A673 (cell line): ENCODE measurements at regions of chr6 and their contacts with region 1.

Region 1: GRCh38 chr6:33126101-33126714 is 50.4 kb downstream of the HLA-DPB1 start:
- DNase-seq: peak; percentile 49
- H3K4me3 ChIP-seq: no peak overlapping the region
- H3K27ac ChIP-seq: no peak overlapping the region
- H3K4me1 ChIP-seq: no peaks in the 10 kb centered on the region
- H3K27me3 ChIP-seq: no peaks in the 10 kb centered on the region
- CTCF ChIP-seq: peak; percentile 84

Region 2: DNA sequence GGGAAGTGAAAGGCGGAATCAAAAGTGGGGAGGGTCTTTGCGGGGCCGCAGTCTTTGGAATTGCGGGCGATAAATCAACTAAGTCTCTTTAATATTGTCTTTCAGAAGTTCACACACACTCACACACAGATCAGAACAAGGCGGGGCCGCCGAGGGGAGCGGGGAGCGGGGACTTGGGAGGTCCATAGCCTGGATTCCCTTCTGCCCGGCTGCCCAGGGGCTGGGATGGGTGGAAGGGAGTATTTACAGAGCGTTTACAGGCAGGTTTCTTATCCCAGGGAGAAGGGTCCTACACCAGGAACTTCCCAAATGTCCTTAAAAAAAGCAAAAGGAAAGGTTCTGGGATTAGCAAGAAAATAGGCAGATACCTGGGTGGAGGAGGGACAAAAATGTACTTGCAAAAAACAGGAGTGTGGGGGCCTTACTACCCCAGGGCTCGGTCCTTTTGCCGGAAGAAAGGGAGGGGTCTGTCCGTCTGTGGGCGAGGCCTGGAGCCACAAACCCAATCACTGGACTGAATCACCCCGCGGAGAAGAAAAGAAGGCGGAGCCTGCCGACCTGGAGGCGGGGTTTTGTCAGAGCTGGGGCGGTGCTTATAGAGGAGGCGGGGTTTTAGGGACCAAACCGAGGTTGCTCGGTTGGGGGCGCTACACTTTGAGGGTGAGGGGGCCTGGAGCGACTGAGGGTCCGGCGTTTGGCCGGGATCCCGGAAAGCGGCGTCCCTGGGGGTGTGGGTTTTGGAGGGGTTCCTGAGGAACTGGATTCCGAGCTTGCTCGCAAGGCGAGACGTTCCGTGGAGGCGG is 977.7 kb before region 1 on chr6:
- CTCF ChIA-PET with region 1: no interaction called
- POLR2A ChIA-PET with region 1: no interaction called
- intact Hi-C with region 1: no loop called
- DNase-seq: no peak
- H3K4me3 ChIP-seq: no peak overlapping the region
- H3K27ac ChIP-seq: no peak overlapping the region
- H3K4me1 ChIP-seq: peaks cover 17% of the 10 kb centered on the region
- H3K27me3 ChIP-seq: no peaks in the 10 kb centered on the region
- CTCF ChIP-seq: no peak

Region 3: DNA sequence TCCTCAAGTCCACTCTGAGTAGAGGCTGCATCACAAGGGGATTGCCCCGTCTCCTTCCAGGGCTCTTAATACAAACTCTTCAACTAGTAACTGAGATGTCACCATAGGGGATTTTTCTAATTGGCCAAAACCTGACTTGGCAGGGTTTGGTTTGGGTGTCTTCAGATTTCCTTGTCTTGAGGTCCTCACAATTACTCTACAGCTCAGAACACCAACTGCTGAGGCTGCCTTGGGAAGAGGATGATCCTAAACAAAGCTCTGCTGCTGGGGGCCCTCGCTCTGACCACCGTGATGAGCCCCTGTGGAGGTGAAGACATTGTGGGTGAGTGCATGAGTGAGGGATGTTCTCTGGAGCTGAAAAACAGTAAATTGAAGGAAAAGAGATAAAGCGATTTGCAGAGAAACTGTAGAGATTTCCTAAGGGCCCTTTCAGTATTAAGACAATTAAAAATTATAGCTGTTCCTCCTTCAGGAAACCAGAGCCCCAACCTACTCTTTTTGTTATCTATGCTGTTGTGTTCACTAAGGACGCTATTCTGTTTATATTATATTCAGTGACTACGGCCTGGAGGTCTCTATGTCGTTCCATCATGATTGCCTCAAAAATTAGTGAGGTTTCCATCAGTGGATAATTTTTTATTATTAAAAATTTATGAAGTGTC is 488.9 kb before region 1 on chr6 and contains the start of gene HLA-DQA1:
- CTCF ChIA-PET with region 1: interaction called, 20 read pairs
- POLR2A ChIA-PET with region 1: no interaction called
- intact Hi-C with region 1: no loop called
- DNase-seq: no peak
- H3K4me3 ChIP-seq: no peak within 1 kb of the TSS
- H3K27ac ChIP-seq: no peak within 1 kb of the TSS
- H3K4me1 ChIP-seq: no peaks in the 10 kb centered on the region
- H3K27me3 ChIP-seq: no peaks in the 10 kb centered on the region
- CTCF ChIP-seq: no peak
- total RNA-seq, gene HLA-DQA1: not detected in 2 replicates